AG04449 (cell line): ENCODE measurements at regions of chr4 and their contacts with region 1.

Region 1: DNA sequence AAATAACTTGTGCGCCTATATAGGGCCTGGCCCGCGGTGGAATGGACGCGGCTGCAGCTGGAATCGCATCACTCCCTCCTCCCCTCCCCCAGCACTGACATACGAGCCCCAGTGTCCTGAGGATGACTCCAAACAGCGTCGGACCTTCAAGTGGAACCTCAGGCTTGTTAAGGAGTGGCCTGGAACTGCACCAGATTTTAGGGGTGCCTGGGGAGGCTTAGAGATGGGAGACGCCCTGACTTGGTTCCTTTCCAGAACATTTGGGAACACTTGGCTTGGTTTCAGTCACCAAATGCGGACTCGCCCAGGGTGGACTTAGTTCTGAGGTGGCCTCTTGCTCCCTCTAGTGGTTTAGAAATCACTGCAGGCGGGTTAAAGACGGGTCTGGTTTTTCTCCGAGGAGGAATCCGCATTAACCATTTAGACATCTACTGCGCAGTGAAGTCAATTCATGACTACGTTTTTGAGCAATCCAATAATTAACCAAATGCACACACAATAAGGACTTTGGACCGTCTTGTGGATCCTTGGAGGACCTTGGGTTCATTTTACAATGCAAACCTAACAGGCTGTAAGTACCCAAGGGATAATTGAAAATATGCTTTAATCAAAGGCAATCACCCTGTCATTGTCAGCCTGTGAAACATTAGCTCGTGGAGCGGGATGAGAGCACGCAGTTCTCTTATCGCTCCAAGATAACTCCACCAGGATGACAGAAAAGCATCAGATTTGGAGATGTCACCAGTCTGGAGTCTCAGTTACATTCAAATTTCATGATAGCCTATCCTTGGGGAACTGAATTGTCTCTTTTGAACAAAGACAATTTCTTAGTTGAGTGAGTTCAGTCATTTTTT is 11.2 kb upstream of the PDGFRA start:
- DNase-seq: no peak
- H3K4me3 ChIP-seq: peak overlapping the region; percentile 62
- CTCF ChIP-seq: peak; percentile 76

Region 2: GRCh38 chr4:53656421-53657046 is 561.3 kb before region 1 on chr4:
- CTCF ChIA-PET with region 1: no interaction called
- POLR2A ChIA-PET with region 1: no interaction called
- DNase-seq: no peak
- H3K4me3 ChIP-seq: no peak overlapping the region
- CTCF ChIP-seq: peak; percentile 46

Region 3: DNA sequence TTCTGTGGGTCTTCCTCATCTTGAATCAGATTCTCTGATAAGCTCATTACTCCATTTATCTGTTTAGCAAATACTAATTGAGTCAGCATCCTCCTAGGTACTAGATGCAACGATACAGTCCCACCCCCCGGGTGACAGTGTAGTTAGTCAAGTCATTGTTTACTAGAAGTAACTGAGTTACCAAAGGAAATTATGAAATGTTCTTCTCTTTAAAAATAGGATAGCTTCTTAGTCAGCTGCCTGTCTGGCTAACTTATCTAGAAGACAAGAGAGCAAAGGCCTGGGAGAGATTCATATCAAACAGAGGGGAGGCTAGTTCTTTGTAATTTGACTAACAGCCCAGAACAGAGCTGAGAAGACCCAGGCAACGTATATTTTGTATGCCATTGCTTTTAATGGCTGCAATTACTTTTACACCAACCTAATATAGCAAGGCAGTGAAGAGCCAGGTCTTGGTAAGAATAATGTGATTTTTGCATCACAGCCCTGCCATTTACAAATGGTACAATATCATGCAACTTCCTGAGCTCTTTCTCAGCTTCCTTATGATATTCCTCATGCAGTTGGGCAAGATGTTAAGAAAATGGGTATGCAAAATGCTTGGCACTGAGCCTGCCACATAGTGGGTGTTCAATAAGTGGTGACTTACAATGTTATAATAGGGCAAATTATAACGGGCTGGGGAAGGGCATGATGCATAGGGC is 303.4 kb before region 1 on chr4:
- CTCF ChIA-PET with region 1: interaction called, 46 read pairs
- POLR2A ChIA-PET with region 1: no interaction called
- DNase-seq: peak; percentile 47
- H3K4me3 ChIP-seq: no peak overlapping the region
- CTCF ChIP-seq: no peak

Region 4: GRCh38 chr4:54064295-54065111 is 153.4 kb before region 1 on chr4 and contains the start of gene CHIC2:
- CTCF ChIA-PET with region 1: interaction called, 16 read pairs
- POLR2A ChIA-PET with region 1: interaction called, 3 read pairs
- DNase-seq: no peak
- H3K4me3 ChIP-seq: peak within 1 kb of the TSS; percentile 87
- CTCF ChIP-seq: no peak

Region 5: DNA sequence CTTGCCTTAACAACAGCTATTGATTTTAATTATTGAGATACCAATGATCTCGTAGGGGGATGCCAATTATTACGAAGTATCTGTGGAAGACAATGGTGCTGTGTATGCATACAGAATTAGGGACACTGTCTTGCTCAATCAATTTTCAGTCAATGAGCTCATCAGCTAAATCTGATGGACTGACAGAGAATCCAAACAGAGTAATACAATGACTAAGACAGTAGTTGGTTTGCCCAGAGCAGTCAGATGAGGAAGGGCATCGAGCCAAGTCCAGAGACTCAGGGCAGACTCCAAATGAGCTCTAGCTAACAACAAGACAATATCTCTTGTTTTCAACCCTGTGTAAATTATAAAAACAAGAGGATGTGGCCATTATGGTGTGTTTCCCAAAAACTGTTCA is 132.6 kb before region 1 on chr4:
- CTCF ChIA-PET with region 1: interaction called, 10 read pairs
- POLR2A ChIA-PET with region 1: no interaction called
- DNase-seq: peak; percentile 52
- H3K4me3 ChIP-seq: no peak overlapping the region
- CTCF ChIP-seq: no peak

Region 6: GRCh38 chr4:54228056-54228527 is 10.2 kb after region 1 on chr4:
- CTCF ChIA-PET with region 1: interaction called, 23 read pairs
- POLR2A ChIA-PET with region 1: interaction called, 3 read pairs
- DNase-seq: no peak
- H3K4me3 ChIP-seq: peak overlapping the region; percentile 93
- CTCF ChIP-seq: peak; percentile 97